Activated T-helper 1 cell treated with anti-CD3 and anti-CD28 coated beads, Interleukin-12 subunit alpha, Interleukin-12 subunit beta, Interleukin-2, Interleukin-4 antibody, amounts not matched to agents 30 ng/mL and 10 ng/mL and 1 ng/mL, durations not matched to agents 14 hours and 24 hours and 36 hours (primary cell): ENCODE measurements at regions of chr10 and their contacts with region 1.

Region 1: GRCh38 chr10:23362879-23363792 is 18.5 kb upstream of the C10orf67 start:
- DNase-seq: peak; percentile 55
- H3K4me3 Mint-ChIP-seq: peak overlapping the region; percentile 78
- H3K27ac Mint-ChIP-seq: peak overlapping the region; percentile 93
- H3K4me1 Mint-ChIP-seq: peaks cover 54% of the 10 kb centered on the region
- H3K27me3 Mint-ChIP-seq: no peaks in the 10 kb centered on the region

Region 2: DNA sequence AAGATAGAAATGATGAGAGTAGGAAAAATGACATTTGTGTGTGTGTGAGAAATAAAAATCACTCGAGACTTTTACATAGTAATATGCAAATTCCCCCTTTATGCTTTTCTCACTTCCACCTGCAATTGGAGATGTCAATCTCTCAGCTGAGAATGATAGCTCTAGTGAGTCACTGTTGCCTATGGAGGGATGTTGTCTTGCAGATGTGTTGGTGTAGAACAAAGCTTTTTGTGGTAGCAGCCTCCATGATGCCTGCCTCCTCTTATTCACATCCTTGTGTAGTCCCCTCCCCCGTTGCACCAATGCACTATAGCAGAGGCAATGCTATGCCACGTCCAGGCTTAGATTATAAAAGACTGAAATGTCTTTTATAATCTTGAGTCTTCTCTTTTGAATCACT is 984.1 kb before region 1 on chr10:
- intact Hi-C with region 1: loop called (anchors 2 kb)
- DNase-seq: peak; percentile 7
- H3K4me3 Mint-ChIP-seq: peak overlapping the region; percentile 27
- H3K27ac Mint-ChIP-seq: peak overlapping the region; percentile 81
- H3K4me1 Mint-ChIP-seq: peaks cover 30% of the 10 kb centered on the region
- H3K27me3 Mint-ChIP-seq: peaks cover 3% of the 10 kb centered on the region

Region 3: DNA sequence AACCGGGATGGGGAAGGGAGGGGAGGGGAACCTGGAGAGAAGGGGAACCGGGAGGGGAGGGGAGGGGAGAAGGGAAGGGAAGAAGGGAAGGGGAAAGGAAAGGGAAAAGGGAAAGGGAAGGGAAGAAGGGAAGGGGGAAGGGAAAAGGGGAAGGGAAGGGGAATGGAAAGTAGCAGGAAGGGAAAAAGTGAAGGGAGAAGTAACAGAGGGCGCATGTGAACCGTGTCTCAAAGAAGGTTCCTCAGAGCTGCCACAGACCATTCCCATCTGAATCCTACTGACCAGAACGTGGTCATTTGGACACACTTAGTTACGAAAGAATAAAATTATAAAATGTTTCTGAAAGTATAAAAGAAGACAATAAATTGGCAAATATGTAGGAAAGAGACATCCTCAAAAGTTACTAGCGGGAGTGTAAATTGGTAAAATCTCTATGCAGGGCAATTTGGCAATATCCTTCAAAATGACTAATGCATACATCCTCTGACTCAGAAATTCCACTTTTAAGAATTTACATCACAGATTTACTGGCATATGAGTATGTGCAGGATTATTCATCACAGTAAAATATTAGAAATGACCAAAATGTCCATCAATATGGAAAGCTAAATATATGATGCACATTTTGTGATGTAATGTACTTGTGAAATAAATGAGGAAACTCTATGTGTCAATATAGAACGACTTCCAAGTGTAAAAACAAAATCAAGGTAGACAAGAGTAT is 31.4 kb before region 1 on chr10:
- intact Hi-C with region 1: loop called (anchors 1 kb)
- DNase-seq: no peak
- H3K4me3 Mint-ChIP-seq: no peak overlapping the region
- H3K27ac Mint-ChIP-seq: peak overlapping the region; percentile 1
- H3K4me1 Mint-ChIP-seq: peaks cover 20% of the 10 kb centered on the region
- H3K27me3 Mint-ChIP-seq: no peaks in the 10 kb centered on the region

Region 4: DNA sequence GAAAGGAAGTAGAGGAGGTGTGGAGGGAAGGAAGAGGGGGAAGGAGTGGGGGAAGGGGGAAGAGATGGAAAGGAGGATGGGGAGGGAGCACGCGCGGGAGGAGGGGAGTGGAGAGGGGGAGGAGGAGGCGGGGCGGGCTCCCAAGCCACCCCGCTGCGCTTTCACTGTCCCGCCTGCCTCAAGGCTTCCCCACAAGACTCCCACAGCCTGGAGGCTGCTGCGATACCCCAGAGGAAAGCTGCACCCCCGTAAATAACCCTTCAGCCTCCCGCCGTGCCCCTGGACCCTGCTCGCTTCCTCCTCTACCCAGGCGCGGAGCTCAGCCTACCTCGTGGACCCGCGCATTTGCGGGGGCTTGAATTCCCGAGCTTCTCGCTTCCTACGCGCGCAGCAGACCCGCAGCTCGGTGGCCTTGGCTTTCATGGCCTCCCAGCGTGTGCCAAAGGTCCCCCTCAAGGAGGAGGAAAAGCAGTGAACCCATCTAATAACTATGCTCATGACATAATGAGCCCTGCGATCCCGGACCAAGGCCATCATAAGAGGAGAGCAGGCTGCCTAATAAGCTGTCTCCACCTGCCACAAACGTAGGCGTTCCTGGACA is 18.8 kb before region 1 on chr10 and contains the start of gene C10orf67:
- intact Hi-C with region 1: loop called (anchors 1 kb)
- DNase-seq: no peak
- H3K4me3 Mint-ChIP-seq: peak within 1 kb of the TSS; percentile 87
- H3K27ac Mint-ChIP-seq: peak within 1 kb of the TSS; percentile 76
- H3K4me1 Mint-ChIP-seq: peaks cover 30% of the 10 kb centered on the region
- H3K27me3 Mint-ChIP-seq: no peaks in the 10 kb centered on the region
- total RNA-seq, gene C10orf67: 0.18 TPM in 1 of 2 replicates, not detected in the other

Region 5: GRCh38 chr10:23391821-23392220 is 28.7 kb after region 1 on chr10:
- intact Hi-C with region 1: loop called (anchors 1 kb)
- DNase-seq: no peak
- H3K4me3 Mint-ChIP-seq: no peak overlapping the region
- H3K27ac Mint-ChIP-seq: peak overlapping the region; percentile 16
- H3K4me1 Mint-ChIP-seq: peaks cover 9% of the 10 kb centered on the region
- H3K27me3 Mint-ChIP-seq: no peaks in the 10 kb centered on the region

Region 6: GRCh38 chr10:23412223-23412622 is 49.1 kb after region 1 on chr10:
- intact Hi-C with region 1: loop called (anchors 1 kb)
- DNase-seq: no peak
- H3K4me3 Mint-ChIP-seq: no peak overlapping the region
- H3K27ac Mint-ChIP-seq: peak overlapping the region; percentile 80
- H3K4me1 Mint-ChIP-seq: peaks cover 22% of the 10 kb centered on the region
- H3K27me3 Mint-ChIP-seq: no peaks in the 10 kb centered on the region

Region 7: DNA sequence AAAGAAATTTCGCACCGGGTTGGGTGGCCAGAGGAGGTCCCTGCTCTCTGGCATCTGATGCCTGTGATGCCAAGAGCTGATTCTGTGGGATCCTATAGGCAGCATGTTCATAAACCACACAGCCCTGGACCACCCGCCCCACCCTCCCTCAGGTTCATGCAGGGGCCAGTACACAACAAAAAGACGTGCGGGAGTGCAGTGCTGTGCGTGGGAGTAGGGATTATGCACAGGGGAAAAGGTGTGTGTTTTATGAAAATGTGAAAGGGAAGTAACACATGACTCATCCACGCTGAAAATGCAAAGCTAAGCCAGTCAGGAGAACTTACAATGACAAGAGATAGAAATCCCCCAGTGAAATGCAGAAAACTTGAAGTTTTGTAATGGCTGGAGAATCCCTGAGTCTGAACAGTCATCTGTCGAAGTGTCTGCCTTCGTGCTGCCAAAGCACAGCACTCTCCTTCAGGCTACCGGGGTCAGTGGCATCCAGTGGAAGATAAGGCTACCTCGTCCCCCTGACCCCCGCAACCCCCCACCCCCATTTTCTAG is 846.9 kb after region 1 on chr10:
- intact Hi-C with region 1: loop called (anchors 1 kb)
- DNase-seq: peak; percentile 8
- H3K4me3 Mint-ChIP-seq: peak overlapping the region; percentile 83
- H3K27ac Mint-ChIP-seq: peak overlapping the region; percentile 90
- H3K4me1 Mint-ChIP-seq: peaks cover 39% of the 10 kb centered on the region
- H3K27me3 Mint-ChIP-seq: peaks cover 24% of the 10 kb centered on the region